Astrocyte of the cerebellum (primary cell): ENCODE measurements at regions of chr19 and their contacts with region 1.

Region 1: GRCh38 chr19:16371540-16371986 is 46.9 kb downstream of the KLF2 start:
- DNase-seq: no peak
- H3K4me3 ChIP-seq: no peak overlapping the region
- CTCF ChIP-seq: no peak

Region 2: GRCh38 chr19:16125737-16126495 is 245.6 kb before region 1 on chr19:
- in situ Hi-C with region 1: loop called (anchors 5 kb)
- DNase-seq: no peak
- H3K4me3 ChIP-seq: no peak overlapping the region
- CTCF ChIP-seq: no peak

Region 3: DNA sequence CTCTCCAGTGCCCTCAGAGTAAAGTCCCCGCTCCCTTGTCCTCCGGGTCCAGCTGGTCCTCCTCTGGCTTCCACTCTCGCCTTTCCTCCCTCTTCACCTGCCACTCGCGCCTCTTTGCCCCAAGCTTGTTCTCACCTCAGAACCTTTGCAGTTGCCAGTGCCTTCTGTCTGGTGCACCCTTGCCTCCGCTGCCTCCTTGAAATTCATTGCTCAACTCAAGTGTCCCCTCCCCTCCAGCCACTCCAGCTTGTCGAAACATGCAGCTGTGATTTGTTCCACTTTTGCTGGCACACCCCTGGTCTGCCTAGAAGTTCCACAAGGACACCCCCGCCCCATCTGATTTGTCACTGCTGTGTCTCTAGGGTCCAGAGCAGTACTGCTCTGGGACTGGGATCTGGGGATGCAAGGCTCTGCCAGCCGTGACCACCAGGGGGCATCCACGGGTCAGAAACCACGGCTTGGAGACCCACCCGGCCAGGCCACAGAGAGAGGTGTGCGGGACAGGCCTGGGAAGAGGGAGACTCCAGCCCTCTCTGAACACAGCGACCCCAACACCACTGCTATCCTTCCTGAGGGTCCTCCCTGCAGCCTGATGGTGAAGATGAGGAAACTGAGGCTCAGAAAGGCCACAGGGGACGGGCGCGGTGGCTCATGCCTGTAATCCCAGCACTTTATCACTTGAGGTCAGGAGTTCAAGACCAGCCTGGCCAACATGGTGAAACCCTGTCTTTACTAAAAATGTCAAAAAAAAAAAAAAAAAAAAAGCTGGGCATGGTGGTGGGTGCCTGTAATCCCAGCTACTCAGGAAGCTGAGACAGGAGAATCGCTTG is 124.0 kb before region 1 on chr19:
- in situ Hi-C with region 1: loop called (anchors 5 kb)
- DNase-seq: peak; percentile 47
- H3K4me3 ChIP-seq: no peak overlapping the region
- CTCF ChIP-seq: peak; percentile 95

Region 4: GRCh38 chr19:16283210-16284061 is 88.1 kb before region 1 on chr19:
- in situ Hi-C with region 1: loop called (anchors 5 kb)
- DNase-seq: peak; percentile 26
- H3K4me3 ChIP-seq: no peak overlapping the region
- CTCF ChIP-seq: no peak